Heart right ventricle (tissue), 16 donors: ENCODE measurements at regions of chr7 and their contacts with region 1.

Region 1: DNA sequence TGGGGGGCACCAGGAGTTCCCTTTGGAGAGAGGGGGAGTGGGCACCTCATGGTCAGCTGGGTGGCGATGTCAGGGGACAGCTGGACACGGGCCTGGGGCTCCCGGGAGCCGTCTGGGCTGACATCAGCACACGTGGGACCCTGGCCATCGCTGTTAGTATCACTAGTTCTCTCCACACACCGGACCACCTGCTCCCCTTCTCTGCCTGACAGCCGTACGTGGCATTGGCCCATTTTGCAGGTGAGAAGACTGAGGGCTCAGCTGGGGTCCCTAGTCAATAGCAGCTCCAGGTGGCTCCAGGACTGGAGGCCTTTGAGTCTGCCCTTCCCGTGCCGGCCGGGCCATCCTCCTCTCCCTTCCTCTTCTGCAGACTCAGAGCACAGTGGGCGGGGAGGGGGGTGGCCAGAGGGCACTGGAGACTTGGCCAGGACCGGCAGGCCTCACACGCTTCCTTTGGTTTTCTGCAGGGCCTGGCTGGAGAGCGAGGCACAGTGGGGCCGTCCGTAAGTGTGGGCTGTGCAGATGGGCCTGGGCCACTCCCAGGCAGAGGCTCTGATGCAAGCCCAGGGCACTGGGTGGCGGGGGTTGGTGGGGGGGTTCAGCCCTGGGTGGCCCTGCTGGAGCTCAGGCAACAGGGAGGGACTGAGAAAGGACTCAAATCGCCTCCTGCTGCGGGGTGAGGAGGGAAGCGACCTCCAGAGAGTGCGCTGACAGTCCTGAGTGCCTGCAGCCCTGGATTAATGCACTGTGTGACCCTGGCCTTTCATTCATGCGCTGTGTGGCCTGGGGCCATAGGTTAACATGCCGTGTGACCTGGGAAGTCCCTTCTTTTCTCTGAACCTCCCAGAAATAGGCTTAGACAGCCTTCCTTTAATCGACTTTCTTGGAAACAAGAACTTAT is 78.2 kb downstream of the MYL10 start:
- DNase-seq: no peak
- ATAC-seq: no peak
- H3K4me3 ChIP-seq: no peak overlapping the region
- H3K27ac ChIP-seq: no peak overlapping the region
- H3K4me1 ChIP-seq: no peaks in the 10 kb centered on the region
- H3K27me3 ChIP-seq: peaks cover 0 to 17% (median 0%) of the 10 kb centered on the region in 7 donors
- CTCF ChIP-seq: no peak

Region 2: GRCh38 chr7:101644879-101645278 is 94.0 kb after region 1 on chr7:
- intact Hi-C with region 1: no loop called
- DNase-seq: no peak
- ATAC-seq: peak in 7 of 8 donors; percentile 25 to 62 (median 38)
- H3K4me3 ChIP-seq: no peak overlapping the region
- H3K27ac ChIP-seq: no peak overlapping the region
- H3K4me1 ChIP-seq: peaks cover 0 to 7% (median 0%) of the 10 kb centered on the region in 9 donors
- H3K27me3 ChIP-seq: peaks cover 0 to 11% (median 0%) of the 10 kb centered on the region in 7 donors
- CTCF ChIP-seq: no peak

Region 3: DNA sequence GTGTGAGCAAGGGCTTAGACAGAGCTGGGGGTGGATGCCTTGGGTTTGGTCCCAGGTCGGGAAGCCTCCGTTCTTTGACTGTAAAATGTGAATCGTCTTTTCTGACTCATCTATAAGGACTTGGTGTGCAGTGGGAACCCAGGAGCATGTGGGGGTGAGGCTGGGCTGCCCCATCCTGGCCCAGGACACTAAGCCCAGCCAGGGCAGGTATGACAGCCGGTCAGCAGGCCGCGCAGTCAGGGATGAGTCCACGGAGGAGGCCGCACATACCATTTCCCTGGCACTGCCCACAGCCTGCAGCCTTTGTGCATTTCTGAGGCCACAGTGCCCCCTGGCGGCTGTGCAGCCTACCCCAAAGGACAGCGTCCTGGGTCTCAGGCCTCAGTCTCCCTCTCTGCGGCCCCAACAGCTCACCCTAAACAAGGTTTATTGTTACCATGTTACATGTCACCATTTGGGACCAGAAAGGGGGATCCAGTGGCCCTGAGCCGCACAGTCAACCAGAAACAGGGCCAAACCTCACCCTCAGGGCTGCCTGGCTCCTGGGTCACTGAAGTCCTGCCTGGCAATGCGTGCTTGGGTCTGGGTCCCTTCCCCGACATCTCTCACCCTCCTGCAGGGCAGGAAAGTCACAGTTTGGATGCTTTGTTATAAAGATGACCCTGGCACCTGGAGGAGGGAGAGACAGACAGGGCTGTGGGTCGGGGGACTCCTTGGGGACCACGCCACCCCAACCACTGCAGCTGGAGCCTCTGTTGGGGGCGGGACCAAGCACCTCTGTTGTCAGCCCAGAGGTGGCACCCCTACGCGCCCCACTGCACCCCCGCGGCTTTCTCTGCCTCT is 721.4 kb after region 1 on chr7:
- intact Hi-C with region 1: loop called in 1 of 10 experiments (anchors 5 kb)
- DNase-seq: peak; percentile 66 to 82
- ATAC-seq: peak; percentile 87 to 90 (median 89)
- H3K4me3 ChIP-seq: no peak overlapping the region
- H3K27ac ChIP-seq: no peak overlapping the region
- H3K4me1 ChIP-seq: peaks cover 0 to 7% (median 0%) of the 10 kb centered on the region in 9 donors
- H3K27me3 ChIP-seq: no peaks in the 10 kb centered on the region
- CTCF ChIP-seq: peak; percentile 76 to 95 (median 89)